HCT116 (cell line): ENCODE measurements at regions of chr12 and their contacts with region 1.

Region 1: GRCh38 chr12:122054842-122055520 is 23.6 kb upstream of the MLXIP start:
- DNase-seq: no peak
- ATAC-seq: no peak
- H3K4me3 ChIP-seq: no peak overlapping the region
- H3K27ac ChIP-seq: no peak overlapping the region
- H3K4me1 ChIP-seq: peaks cover 0 to 6% of the 10 kb centered on the region in 2 experiments; a peak in 1 of 4 replicates
- H3K27me3 ChIP-seq: no peaks in the 10 kb centered on the region
- CTCF ChIP-seq: no peak
- POLR2A ChIP-seq: no peak
- RAD21 ChIP-seq: no peak

Region 2: GRCh38 chr12:122003651-122004611 is 51.0 kb before region 1 on chr12:
- CTCF ChIA-PET with region 1: no interaction called
- POLR2A ChIA-PET with region 1: no interaction called
- RAD21 ChIA-PET with region 1: no interaction called
- intact Hi-C with region 1: no loop called
- DNase-seq: no peak
- ATAC-seq: no peak
- H3K4me3 ChIP-seq: no peak overlapping the region
- H3K27ac ChIP-seq: no peak overlapping the region
- H3K4me1 ChIP-seq: no peaks in the 10 kb centered on the region; a peak in 1 of 4 replicates
- H3K27me3 ChIP-seq: no peaks in the 10 kb centered on the region
- CTCF ChIP-seq: no peak
- POLR2A ChIP-seq: no peak
- RAD21 ChIP-seq: no peak

Region 3: GRCh38 chr12:122130150-122130549 is 75.2 kb after region 1 on chr12:
- CTCF ChIA-PET with region 1: interaction called, 29 read pairs
- POLR2A ChIA-PET with region 1: no interaction called
- RAD21 ChIA-PET with region 1: no interaction called
- intact Hi-C with region 1: loop called (anchors 2 kb)
- DNase-seq: peak; percentile 28
- ATAC-seq: peak; percentile 81
- H3K4me3 ChIP-seq: no peak overlapping the region
- H3K27ac ChIP-seq: peak overlapping the region; percentile 79
- H3K4me1 ChIP-seq: peaks cover 12 to 20% of the 10 kb centered on the region in 2 experiments
- H3K27me3 ChIP-seq: no peaks in the 10 kb centered on the region
- CTCF ChIP-seq: no peak
- POLR2A ChIP-seq: no peak
- RAD21 ChIP-seq: no peak

Region 4: DNA sequence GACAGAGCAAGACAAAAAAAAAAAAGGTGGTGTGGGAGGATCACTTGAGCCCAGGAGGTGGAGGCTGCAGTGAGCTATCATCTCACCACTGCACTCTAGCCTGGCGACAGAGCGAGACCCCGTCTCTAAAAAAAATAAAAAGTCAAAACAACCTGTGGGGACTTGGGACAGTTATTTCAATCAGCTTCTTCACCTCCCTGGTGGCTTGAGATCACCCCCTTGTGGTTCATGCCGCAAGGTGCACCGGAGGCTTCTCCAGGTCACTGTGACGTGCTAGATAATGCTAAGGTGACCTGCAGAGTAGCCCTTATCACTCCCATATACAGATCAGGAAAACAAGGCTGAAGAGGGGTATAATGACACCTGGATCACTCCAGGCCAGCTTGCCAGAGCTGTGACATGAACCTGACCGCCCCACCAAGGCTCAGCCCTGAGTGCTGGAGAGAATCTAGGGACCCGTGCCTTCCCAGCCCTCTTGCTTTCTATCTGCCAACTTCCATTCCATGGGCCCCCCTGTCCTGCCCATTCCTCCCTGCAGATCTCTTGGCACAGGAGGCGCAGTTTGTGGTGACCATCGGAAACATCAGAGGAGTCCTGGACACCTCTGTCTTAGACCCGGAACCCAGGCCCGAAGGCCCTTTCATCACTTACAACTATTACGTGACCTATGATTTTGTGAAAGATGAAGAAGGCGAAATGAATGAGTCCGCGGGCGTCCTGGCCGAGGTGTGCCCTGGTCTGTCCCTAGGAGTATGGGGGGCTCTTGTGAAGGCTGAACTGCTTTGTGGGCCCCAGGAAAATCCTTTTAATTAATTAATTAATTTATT is 136.1 kb after region 1 on chr12:
- CTCF ChIA-PET with region 1: interaction called, 12 read pairs
- POLR2A ChIA-PET with region 1: no interaction called
- RAD21 ChIA-PET with region 1: interaction called, 3 to 5 read pairs
- intact Hi-C with region 1: loop called (anchors 1 kb)
- DNase-seq: peak; percentile 72
- ATAC-seq: peak; percentile 98
- H3K4me3 ChIP-seq: no peak overlapping the region
- H3K27ac ChIP-seq: no peak overlapping the region
- H3K4me1 ChIP-seq: no peaks in the 10 kb centered on the region
- H3K27me3 ChIP-seq: no peaks in the 10 kb centered on the region
- CTCF ChIP-seq: peak; percentile 89 to 95 (median 91)
- POLR2A ChIP-seq: no peak
- RAD21 ChIP-seq: peak; percentile 93